ENCODE measurements at regions of chr1 and their contacts with region 1.

Region 1: GRCh38 chr1:3423245-3423829 is 31.1 kb upstream of the ARHGEF16 start:
- DNase-seq: peak; percentile 83 to 87 (median 87)
- ATAC-seq: peak; percentile 90
- H3K4me3 ChIP-seq: no peak overlapping the region
- H3K4me1 ChIP-seq: peaks cover 16% of the 10 kb centered on the region
- CTCF ChIP-seq: no peak

Region 2: GRCh38 chr1:2412519-2413233 is 1010.7 kb before region 1 on chr1 and contains the start of gene PEX10:
- intact Hi-C with region 1: loop called in 1 of 2 experiments (anchors 10 kb)
- DNase-seq: peak; percentile 98 to 100 (median 99)
- ATAC-seq: peak; percentile 87
- H3K4me3 ChIP-seq: peak within 1 kb of the TSS; percentile 44
- H3K4me1 ChIP-seq: peaks cover 44% of the 10 kb centered on the region
- CTCF ChIP-seq: no peak
- total RNA-seq, gene PEX10: 13.4 to 20.4 (median 18.4) TPM

Region 3: GRCh38 chr1:3012456-3013291 is 410.7 kb before region 1 on chr1:
- intact Hi-C with region 1: loop called (anchors 10 kb)
- DNase-seq: peak; percentile 43 to 71 (median 67)
- ATAC-seq: peak; percentile 77
- H3K4me3 ChIP-seq: no peak overlapping the region
- H3K4me1 ChIP-seq: no peaks in the 10 kb centered on the region
- CTCF ChIP-seq: peak; percentile 80

Region 4: DNA sequence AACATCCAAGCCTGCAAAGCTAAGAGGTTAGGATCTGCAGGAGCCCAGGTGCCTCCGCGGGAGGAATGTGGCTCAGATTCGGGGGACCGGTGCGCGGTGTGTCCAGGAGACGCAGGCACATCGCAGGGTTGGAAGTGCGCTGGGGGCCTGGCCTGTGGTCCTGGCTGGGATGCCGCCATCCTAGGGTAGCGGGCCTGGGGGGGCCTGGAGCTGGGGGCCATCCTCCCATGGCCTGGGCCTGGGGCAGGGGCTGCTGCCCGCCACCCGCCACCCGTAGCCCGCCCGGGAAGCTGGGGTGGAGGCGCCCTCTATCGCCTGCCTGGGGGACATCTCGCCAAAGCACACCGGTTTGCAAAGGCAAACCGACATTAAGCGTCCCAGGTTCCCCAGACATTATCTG is 139.5 kb before region 1 on chr1:
- intact Hi-C with region 1: no loop called
- DNase-seq: peak in 2 of 3 donors; percentile 35 to 58
- ATAC-seq: peak; percentile 49
- H3K4me3 ChIP-seq: no peak overlapping the region
- H3K4me1 ChIP-seq: no peaks in the 10 kb centered on the region
- CTCF ChIP-seq: peak; percentile 45

Region 5: GRCh38 chr1:3530926-3531818 is 107.8 kb after region 1 on chr1:
- intact Hi-C with region 1: no loop called
- DNase-seq: peak; percentile 84 to 89 (median 87)
- ATAC-seq: peak; percentile 87
- H3K4me3 ChIP-seq: no peak overlapping the region
- H3K4me1 ChIP-seq: peaks cover 17% of the 10 kb centered on the region
- CTCF ChIP-seq: no peak

Measured in mucosa of descending colon (tissue), 3 donors.